Right cardiac atrium (tissue), 5 donors: ENCODE measurements at regions of chr5 and their contacts with region 1.

Region 1: GRCh38 chr5:56814963-56815658 is at the start of gene MAP3K1:
- DNase-seq: peak; percentile 78 to 92 (median 91)
- ATAC-seq: peak; percentile 84 to 91
- H3K4me3 ChIP-seq: peak within 1 kb of the TSS; percentile 98
- H3K27ac ChIP-seq: peak within 1 kb of the TSS; percentile 92
- H3K4me1 ChIP-seq: peaks cover 2% of the 10 kb centered on the region
- H3K27me3 ChIP-seq: no peaks in the 10 kb centered on the region
- total RNA-seq, gene MAP3K1: 5.4 to 9.0 (median 8.4) TPM

Region 2: GRCh38 chr5:56350598-56351170 is 464.4 kb before region 1 on chr5:
- intact Hi-C with region 1: loop called in 1 of 4 experiments (anchors 10 kb)
- DNase-seq: peak; percentile 74 to 83 (median 80)
- ATAC-seq: peak; percentile 87 to 97
- H3K4me3 ChIP-seq: no peak overlapping the region
- H3K27ac ChIP-seq: no peak overlapping the region
- H3K4me1 ChIP-seq: peaks cover 6% of the 10 kb centered on the region
- H3K27me3 ChIP-seq: no peaks in the 10 kb centered on the region

Region 3: GRCh38 chr5:56481428-56482357 is 333.4 kb before region 1 on chr5:
- intact Hi-C with region 1: loop called in 3 of 4 experiments (anchors 5 to 10 kb)
- DNase-seq: peak; percentile 63 to 74 (median 74)
- ATAC-seq: peak; percentile 49 to 59
- H3K4me3 ChIP-seq: peak overlapping the region; percentile 96
- H3K27ac ChIP-seq: peak overlapping the region; percentile 94
- H3K4me1 ChIP-seq: peaks cover 5% of the 10 kb centered on the region
- H3K27me3 ChIP-seq: no peaks in the 10 kb centered on the region

Region 4: DNA sequence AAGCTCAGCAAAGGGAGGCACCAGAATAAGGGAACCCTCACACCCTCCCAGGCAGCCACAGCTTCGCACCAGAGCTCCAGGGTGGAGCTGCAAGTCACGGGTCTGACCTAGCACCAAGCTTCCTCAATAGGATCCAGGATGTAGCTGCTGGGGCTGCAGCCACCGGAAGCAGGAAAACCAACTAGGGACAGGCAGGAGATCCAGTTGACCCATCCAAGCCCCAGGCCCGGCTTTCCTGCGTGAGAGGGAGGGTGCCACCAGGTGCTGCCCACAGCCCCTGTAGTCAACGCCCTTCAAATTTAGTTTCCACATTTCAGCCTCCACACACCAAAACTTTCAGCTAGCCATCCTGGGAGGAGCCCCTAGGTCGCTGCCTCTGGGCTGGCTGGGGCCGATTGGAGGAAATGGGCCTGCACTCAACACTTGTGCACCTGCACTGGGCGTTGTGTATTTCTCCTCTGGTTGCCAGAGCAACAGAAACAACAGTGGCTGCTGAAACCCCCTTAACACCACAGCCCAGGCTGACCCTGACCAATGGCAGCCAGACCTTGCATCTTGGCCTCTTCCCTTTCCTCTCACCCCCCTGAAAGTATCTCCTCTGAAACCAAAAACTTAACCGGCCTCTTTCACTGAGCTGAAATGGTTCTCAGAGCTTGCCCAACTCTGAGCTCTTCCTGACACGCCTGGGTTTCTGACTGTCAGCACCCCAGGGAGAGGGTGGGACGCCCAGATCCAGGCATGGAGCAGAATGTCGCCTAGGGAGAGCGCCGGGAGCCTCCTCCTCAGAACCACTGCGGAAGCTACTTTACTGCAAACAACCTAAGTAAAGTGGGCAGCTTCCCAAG is 226.3 kb before region 1 on chr5:
- intact Hi-C with region 1: loop called in 1 of 4 experiments (anchors 10 kb)
- DNase-seq: peak; percentile 71 to 75 (median 72)
- ATAC-seq: peak; percentile 49 to 65
- H3K4me3 ChIP-seq: no peak overlapping the region
- H3K27ac ChIP-seq: peak overlapping the region; percentile 25
- H3K4me1 ChIP-seq: peaks cover 11% of the 10 kb centered on the region
- H3K27me3 ChIP-seq: no peaks in the 10 kb centered on the region

Region 5: DNA sequence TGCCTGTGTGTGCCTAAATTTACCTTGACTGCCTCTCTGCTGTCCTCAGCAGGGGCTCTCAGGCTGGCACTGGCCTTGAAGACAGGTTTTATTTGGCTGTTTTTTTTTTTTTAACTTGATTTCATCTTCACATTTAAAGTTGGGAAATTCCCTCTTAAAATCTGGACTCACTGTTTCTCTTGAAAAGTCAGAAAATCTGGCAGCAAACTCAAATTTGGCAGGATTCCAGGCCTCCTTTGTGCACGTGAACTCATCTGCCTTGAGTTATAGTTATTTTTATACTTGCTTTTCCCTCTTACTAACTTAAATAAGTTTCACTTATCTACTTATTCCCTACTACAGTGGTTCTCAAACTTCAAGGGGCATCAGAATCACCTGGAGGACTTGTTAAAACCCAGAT is 118.2 kb before region 1 on chr5:
- intact Hi-C with region 1: loop called in 1 of 4 experiments (anchors 10 kb)
- DNase-seq: no peak
- ATAC-seq: no peak
- H3K4me3 ChIP-seq: no peak overlapping the region
- H3K27ac ChIP-seq: no peak overlapping the region
- H3K4me1 ChIP-seq: peaks cover 12% of the 10 kb centered on the region
- H3K27me3 ChIP-seq: no peaks in the 10 kb centered on the region

Region 6: DNA sequence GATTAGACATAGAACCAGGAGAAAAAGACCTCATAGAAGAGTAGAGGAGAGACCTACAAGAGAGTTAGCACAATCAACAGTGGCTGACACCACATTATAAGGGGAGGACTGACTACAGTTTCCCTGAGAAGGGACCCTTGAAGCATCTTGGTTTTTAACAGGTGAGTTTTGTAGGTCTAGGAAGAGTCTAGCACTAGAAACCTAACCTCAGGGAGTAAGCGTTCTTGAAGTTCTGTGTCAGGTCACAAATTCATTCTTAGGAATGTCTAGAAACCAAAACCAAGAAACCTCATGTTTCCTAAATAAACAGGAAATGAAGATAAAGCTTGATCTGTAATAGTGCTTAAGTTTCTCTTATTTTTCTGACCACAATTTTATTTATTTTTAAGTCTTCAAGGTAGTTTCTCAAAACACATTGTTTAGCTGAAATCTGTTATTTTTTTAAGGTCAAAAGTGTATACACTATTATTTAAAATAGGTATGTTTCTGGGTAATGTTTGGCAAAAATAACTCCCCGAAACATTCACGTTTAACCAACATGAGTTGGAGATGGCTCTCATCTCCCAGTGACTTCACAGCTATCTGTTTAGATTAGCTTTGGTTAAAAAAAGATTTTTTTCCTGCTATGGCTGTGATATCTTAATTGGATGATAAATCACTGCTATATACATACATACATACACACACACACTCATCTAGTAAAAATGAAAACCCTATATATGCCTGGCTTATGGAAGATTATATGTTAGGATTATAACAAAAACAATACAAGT is 37.3 kb after region 1 on chr5:
- intact Hi-C with region 1: no loop called
- DNase-seq: no peak
- ATAC-seq: peak in 1 of 2 donors; percentile 15
- H3K4me3 ChIP-seq: no peak overlapping the region
- H3K27ac ChIP-seq: no peak overlapping the region
- H3K4me1 ChIP-seq: peaks cover 9% of the 10 kb centered on the region
- H3K27me3 ChIP-seq: no peaks in the 10 kb centered on the region